Breast epithelium (tissue), 4 donors: ENCODE measurements at regions of chr16 and their contacts with region 1.

Region 1: DNA sequence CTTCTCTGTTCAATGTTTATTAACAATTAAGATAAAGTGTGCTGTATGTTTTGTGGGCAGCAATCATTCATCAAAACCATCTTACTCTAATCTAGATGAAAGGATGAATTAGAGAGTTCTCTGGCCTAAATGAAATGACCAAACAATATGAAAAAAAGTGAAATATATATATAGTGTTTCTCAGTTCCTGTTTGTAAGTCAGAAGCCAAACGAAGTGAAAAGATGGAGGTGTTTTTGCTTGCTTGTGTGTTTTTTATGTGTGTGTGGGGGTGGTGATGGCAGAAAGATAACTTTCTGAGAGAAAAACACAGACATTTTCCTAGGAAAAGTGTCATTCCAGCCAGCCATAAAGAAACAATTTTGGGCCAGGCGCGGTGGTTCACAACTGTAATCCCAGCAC is 138.6 kb downstream of the CDH8 start:
- DNase-seq: no peak
- H3K4me3 ChIP-seq: no peak overlapping the region
- H3K27ac ChIP-seq: no peak overlapping the region
- H3K4me1 ChIP-seq: no peaks in the 10 kb centered on the region
- H3K27me3 ChIP-seq: no peaks in the 10 kb centered on the region
- CTCF ChIP-seq: no peak
- POLR2A ChIP-seq: no peak

Region 2: DNA sequence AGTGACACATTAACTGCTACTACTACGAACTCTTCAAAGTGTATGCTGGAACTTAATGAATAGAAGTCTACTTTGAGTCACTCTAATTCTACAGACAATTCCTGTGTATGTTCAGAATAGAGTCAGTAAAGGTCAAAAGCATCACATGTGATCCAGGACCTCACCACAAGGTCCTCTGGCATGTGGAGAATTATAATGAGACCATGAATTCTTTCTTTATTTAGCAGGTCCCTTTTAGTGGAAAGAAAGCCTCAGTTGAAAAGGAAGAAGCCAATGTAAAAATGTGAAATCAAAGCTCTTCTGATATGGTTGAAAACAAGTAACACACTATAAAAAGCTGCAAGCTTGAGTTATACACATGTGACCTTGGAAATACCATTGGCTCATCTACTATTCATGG is 1551.4 kb before region 1 on chr16:
- intact Hi-C with region 1: loop called (anchors 5 kb)
- DNase-seq: no peak
- H3K4me3 ChIP-seq: no peak overlapping the region
- H3K27ac ChIP-seq: no peak overlapping the region
- H3K4me1 ChIP-seq: no peaks in the 10 kb centered on the region
- H3K27me3 ChIP-seq: no peaks in the 10 kb centered on the region
- CTCF ChIP-seq: no peak
- POLR2A ChIP-seq: no peak

Region 3: GRCh38 chr16:62021161-62021581 is 123.5 kb after region 1 on chr16:
- intact Hi-C with region 1: no loop called
- DNase-seq: no peak
- H3K4me3 ChIP-seq: no peak overlapping the region
- H3K27ac ChIP-seq: no peak overlapping the region
- H3K4me1 ChIP-seq: no peaks in the 10 kb centered on the region
- H3K27me3 ChIP-seq: no peaks in the 10 kb centered on the region
- CTCF ChIP-seq: no peak
- POLR2A ChIP-seq: no peak